Lower leg skin (tissue), 4 donors: ENCODE measurements at regions of chr12 and their contacts with region 1.

Region 1: GRCh38 chr12:54958048-54958658 is 26.4 kb downstream of the TESPA1 start:
- DNase-seq: no peak
- H3K4me3 ChIP-seq: no peak overlapping the region
- CTCF ChIP-seq: no peak
- POLR2A ChIP-seq: no peak

Region 2: GRCh38 chr12:54701940-54702592 is 256.1 kb before region 1 on chr12:
- intact Hi-C with region 1: loop called (anchors 10 kb)
- DNase-seq: no peak
- H3K4me3 ChIP-seq: no peak overlapping the region
- CTCF ChIP-seq: peak in 1 of 3 donors; percentile 18
- POLR2A ChIP-seq: no peak

Region 3: DNA sequence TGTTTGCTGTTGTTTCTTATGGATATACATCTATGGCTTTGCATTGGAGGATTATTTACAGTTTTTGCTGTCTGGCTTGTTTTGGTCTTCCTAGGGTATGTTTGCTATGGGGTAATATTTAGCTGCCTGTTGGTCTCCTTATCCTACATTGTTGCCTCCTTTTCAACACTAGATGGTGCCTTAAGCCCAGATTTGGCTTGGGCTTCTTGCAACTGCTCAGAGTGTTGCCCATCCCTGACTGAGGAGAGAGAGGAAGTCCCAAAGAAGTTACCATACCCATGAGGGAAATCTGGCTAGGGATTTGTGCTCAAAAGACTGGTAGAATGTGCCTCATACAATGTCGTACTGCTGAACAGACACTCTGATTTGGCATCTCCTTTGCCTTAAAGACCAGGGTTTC is 198.4 kb before region 1 on chr12:
- intact Hi-C with region 1: loop called (anchors 10 kb)
- DNase-seq: no peak
- H3K4me3 ChIP-seq: no peak overlapping the region
- CTCF ChIP-seq: no peak
- POLR2A ChIP-seq: no peak